ENCODE measurements at regions of chr3 and their contacts with region 1.

Region 1: GRCh38 chr3:73624821-73625665 is at the start of gene PDZRN3:
- DNase-seq: peak; percentile 85
- H3K4me3 ChIP-seq: peak within 1 kb of the TSS; percentile 70 to 93 (median 82)
- H3K27ac ChIP-seq: peak within 1 kb of the TSS; percentile 90 to 96 (median 94)
- H3K4me1 ChIP-seq: peaks cover 0 to 28% (median 21%) of the 10 kb centered on the region in 4 donors
- H3K27me3 ChIP-seq: no peaks in the 10 kb centered on the region
- CTCF ChIP-seq: no peak
- EP300 ChIP-seq: peak in 1 of 4 donors; percentile 16
- POLR2A ChIP-seq: peak in 1 of 2 donors; percentile 30
- total RNA-seq, gene PDZRN3: 172 to 209 (median 206) TPM

Region 2: GRCh38 chr3:73100741-73101559 is 524.1 kb before region 1 on chr3:
- intact Hi-C with region 1: loop called (anchors 5 kb)
- DNase-seq: peak; percentile 91
- H3K4me3 ChIP-seq: no peak overlapping the region
- H3K27ac ChIP-seq: no peak overlapping the region
- H3K4me1 ChIP-seq: peaks cover 0 to 6% (median 0%) of the 10 kb centered on the region in 4 donors
- H3K27me3 ChIP-seq: no peaks in the 10 kb centered on the region
- CTCF ChIP-seq: peak; percentile 90 to 95 (median 92)
- EP300 ChIP-seq: no peak
- POLR2A ChIP-seq: no peak

Region 3: GRCh38 chr3:73292220-73292619 is 332.8 kb before region 1 on chr3:
- intact Hi-C with region 1: no loop called
- DNase-seq: no peak
- H3K4me3 ChIP-seq: no peak overlapping the region
- H3K27ac ChIP-seq: no peak overlapping the region
- H3K4me1 ChIP-seq: peaks cover 0 to 7% (median 0%) of the 10 kb centered on the region in 4 donors
- H3K27me3 ChIP-seq: no peaks in the 10 kb centered on the region
- CTCF ChIP-seq: no peak
- EP300 ChIP-seq: no peak
- POLR2A ChIP-seq: no peak

Region 4: DNA sequence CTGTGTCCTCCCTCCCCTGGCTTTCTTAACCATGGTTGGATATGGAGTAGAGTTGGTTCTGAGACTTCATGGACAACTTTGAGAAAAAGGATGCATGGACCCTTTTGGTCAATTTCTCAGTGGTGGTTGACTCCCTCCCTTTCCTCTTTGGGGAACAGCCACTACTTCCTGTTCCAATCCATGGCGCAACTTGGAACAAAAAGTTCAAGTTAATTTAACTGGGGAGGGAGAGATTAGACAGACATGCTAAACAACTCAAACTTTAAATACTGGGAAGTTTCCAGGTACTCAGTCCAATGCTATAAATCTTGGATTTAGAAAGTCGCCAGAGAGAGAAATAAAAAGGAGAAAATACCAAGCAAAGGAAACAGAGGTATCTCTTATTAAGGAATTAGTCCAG is 202.5 kb before region 1 on chr3:
- intact Hi-C with region 1: loop called (anchors 10 kb)
- DNase-seq: no peak
- H3K4me3 ChIP-seq: peak overlapping the region in 1 of 4 donors; percentile 8
- H3K27ac ChIP-seq: peak overlapping the region; percentile 70 to 81 (median 78)
- H3K4me1 ChIP-seq: peaks cover 0 to 88% (median 75%) of the 10 kb centered on the region in 4 donors
- H3K27me3 ChIP-seq: no peaks in the 10 kb centered on the region
- CTCF ChIP-seq: no peak
- EP300 ChIP-seq: peak; percentile 80 to 94 (median 90)
- POLR2A ChIP-seq: no peak

Region 5: DNA sequence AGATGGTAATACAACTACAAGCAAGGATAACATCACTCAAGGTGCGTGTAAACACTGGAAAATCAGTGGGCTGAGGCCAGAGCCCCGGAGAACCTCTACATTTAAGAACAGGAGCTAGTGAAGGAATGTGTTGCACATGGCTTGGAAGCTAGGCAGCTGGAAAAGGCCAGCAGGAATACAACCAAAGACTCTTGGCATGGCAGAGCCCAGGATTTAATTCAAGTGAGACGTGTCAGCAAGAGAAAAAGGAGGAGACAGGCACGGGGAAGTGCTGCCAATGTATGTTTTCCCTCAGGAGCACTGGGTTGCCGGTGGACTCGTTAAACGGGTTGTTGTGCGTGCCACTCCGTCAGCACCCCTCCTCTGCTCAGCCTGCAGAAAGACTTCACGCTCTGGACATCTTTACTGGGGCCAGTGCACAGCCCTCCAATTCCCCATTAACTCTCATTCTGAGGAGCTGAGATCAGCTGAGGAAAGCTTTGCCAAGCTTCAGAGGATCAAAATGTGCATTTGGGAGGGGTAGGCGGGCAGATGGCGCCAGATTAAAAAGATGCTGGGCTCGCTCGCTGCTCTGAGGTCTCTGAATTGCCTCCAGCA is 104.1 kb before region 1 on chr3:
- intact Hi-C with region 1: loop called (anchors 1 kb)
- DNase-seq: peak; percentile 97
- H3K4me3 ChIP-seq: peak overlapping the region; percentile 20 to 51 (median 48)
- H3K27ac ChIP-seq: peak overlapping the region; percentile 85 to 90 (median 86)
- H3K4me1 ChIP-seq: peaks cover 0 to 77% (median 64%) of the 10 kb centered on the region in 4 donors
- H3K27me3 ChIP-seq: no peaks in the 10 kb centered on the region
- CTCF ChIP-seq: no peak
- EP300 ChIP-seq: peak; percentile 78 to 97 (median 94)
- POLR2A ChIP-seq: peak in 1 of 2 donors; percentile 45

Region 6: DNA sequence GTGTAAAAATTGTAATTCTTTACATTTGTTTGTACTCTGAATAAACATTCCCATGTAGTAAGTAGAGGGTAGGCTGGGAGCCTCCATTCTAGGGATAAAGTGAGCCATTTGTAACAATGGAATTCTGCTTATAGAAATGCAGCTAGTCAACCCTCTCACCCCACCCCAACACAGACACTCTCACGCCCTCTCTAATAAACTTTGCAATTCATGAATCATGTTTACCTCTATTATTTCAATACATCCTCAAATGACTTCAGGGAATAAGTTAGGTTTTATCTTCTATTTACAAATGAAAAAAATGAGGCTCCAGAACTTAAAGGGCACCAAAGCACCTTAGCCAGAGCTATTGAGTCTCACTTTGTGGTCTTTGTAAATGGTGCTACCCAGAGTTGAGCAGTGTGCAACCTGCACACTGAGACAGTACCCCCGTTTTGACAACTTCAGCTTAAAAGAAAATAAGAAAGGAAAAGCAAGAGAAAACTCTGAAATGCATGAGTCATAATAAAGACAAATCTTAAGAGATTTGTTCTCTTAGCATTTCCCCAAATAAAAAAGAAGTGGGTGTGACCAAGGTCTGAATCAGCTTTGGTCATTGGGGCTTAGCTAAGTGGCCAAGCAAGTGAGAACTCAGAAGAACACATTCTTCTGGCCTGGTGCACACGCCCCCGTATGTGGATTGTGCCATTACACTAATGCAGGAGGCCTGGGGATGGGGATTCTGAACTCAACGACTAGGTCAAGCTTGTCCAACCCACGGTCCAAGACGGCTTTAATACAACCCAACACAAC is 56.4 kb after region 1 on chr3:
- intact Hi-C with region 1: no loop called
- DNase-seq: no peak
- H3K4me3 ChIP-seq: no peak overlapping the region
- H3K27ac ChIP-seq: no peak overlapping the region
- H3K4me1 ChIP-seq: peaks cover 0 to 4% (median 0%) of the 10 kb centered on the region in 4 donors
- H3K27me3 ChIP-seq: no peaks in the 10 kb centered on the region
- CTCF ChIP-seq: no peak
- EP300 ChIP-seq: no peak
- POLR2A ChIP-seq: no peak

Region 7: GRCh38 chr3:73827725-73828211 is 202.7 kb after region 1 on chr3:
- intact Hi-C with region 1: loop called (anchors 5 kb)
- DNase-seq: no peak
- H3K4me3 ChIP-seq: no peak overlapping the region
- H3K27ac ChIP-seq: peak overlapping the region in 3 of 4 donors; percentile 51 to 69 (median 55)
- H3K4me1 ChIP-seq: peaks cover 0 to 37% (median 25%) of the 10 kb centered on the region in 4 donors
- H3K27me3 ChIP-seq: no peaks in the 10 kb centered on the region
- CTCF ChIP-seq: no peak
- EP300 ChIP-seq: no peak
- POLR2A ChIP-seq: no peak

Region 8: GRCh38 chr3:73848173-73848906 is 223.3 kb after region 1 on chr3:
- intact Hi-C with region 1: loop called (anchors 2 kb)
- DNase-seq: no peak
- H3K4me3 ChIP-seq: no peak overlapping the region
- H3K27ac ChIP-seq: no peak overlapping the region
- H3K4me1 ChIP-seq: peaks cover 0 to 11% (median 3%) of the 10 kb centered on the region in 4 donors
- H3K27me3 ChIP-seq: no peaks in the 10 kb centered on the region
- CTCF ChIP-seq: peak; percentile 39 to 76 (median 70)
- EP300 ChIP-seq: no peak
- POLR2A ChIP-seq: no peak